ENCODE measurements at regions of chrX and their contacts with region 1.

Region 1: GRCh38 chrX:132615391-132616131 is 126.7 kb upstream of the MBNL3 start:
- DNase-seq: peak in 1 of 2 donors; percentile 69
- ATAC-seq: peak; percentile 58 to 72 (median 61)
- H3K4me3 ChIP-seq: no peak overlapping the region
- H3K4me3 Mint-ChIP-seq: no peak overlapping the region
- H3K27ac ChIP-seq: no peak overlapping the region
- H3K27ac Mint-ChIP-seq: no peak overlapping the region
- H3K4me1 ChIP-seq: no peaks in the 10 kb centered on the region
- H3K4me1 Mint-ChIP-seq: peaks cover 0 to 4% of the 10 kb centered on the region in 2 donors
- H3K27me3 ChIP-seq: no peaks in the 10 kb centered on the region
- H3K27me3 Mint-ChIP-seq: peaks cover 0 to 7% of the 10 kb centered on the region in 2 donors
- CTCF ChIP-seq: peak; percentile 23

Region 2: DNA sequence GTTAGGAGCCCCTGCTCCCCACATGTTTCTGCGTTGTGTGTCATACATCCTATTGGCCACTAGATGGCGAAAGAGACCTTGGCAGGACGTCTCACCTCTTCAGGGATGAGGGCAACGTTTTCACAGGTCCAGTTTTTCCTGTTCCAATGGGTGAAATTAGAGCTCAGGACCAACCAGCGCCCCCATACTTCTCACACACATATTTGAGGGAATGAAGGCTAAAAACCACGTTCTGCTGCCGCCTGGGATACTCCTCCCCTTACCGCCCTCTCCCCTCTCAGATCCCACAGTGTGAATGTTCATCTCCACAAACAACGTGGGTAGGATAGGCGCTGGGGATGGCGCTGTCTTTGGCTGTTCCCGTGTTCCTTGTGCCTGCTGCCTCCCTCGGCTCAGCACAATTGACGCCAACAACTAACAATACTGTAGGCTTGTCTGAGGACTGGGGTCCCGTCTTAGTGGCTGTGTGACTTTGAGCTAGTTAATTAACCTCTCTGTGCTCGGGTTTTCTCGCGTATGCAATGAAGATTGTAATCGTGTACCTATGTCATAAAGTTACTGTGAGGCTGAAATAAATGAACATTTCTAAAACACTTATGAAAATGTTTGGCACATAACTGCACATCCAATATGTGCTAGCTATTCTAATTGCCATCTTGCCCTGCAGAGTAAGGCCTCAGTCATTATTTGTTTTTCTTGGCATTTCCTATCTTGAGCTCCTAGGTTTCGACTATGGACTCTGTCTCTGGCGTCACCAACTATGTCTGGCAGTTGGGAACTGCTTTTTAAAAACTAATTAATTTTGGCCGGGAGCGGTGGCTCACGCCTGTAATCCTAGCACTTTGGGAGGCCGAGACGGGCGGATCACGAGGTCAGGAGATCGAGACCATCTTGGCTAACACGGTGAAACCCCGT is 773.8 kb before region 1 on chrX:
- intact Hi-C with region 1: loop called (anchors 2 kb)
- DNase-seq: peak in 1 of 2 donors; percentile 74
- ATAC-seq: peak in 2 of 3 donors; percentile 76 to 92
- H3K4me3 ChIP-seq: no peak overlapping the region
- H3K4me3 Mint-ChIP-seq: no peak overlapping the region
- H3K27ac ChIP-seq: no peak overlapping the region
- H3K27ac Mint-ChIP-seq: no peak overlapping the region
- H3K4me1 ChIP-seq: peaks cover 7% of the 10 kb centered on the region
- H3K4me1 Mint-ChIP-seq: peaks cover 0 to 7% of the 10 kb centered on the region in 2 donors
- H3K27me3 ChIP-seq: no peaks in the 10 kb centered on the region
- H3K27me3 Mint-ChIP-seq: peaks cover 0 to 33% of the 10 kb centered on the region in 2 donors
- CTCF ChIP-seq: peak; percentile 69

Region 3: DNA sequence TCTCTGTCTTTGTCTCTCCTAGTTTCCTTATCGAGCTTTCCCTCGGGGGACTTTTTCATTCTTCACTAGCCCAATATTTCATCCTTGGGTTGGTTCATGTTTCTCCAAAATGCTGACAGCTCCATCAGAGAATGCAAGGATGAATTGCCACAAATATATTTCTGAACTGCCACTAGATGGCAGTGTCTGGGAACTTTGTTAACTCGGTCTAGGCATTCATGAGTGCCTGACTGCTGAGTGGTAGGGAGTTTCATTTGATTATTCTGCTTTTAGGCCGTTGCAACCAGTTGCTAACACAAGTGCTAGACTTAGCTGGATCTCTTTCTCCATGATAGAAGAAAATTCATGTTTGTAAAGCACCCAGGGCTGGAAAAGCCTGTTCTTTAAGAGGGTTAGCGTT is 322.8 kb before region 1 on chrX:
- intact Hi-C with region 1: loop called (anchors 2 kb)
- DNase-seq: peak in 1 of 2 donors; percentile 70
- ATAC-seq: peak in 2 of 3 donors; percentile 38 to 81
- H3K4me3 ChIP-seq: no peak overlapping the region
- H3K4me3 Mint-ChIP-seq: no peak overlapping the region
- H3K27ac ChIP-seq: no peak overlapping the region
- H3K27ac Mint-ChIP-seq: no peak overlapping the region
- H3K4me1 ChIP-seq: no peaks in the 10 kb centered on the region
- H3K4me1 Mint-ChIP-seq: no peaks in the 10 kb centered on the region
- H3K27me3 ChIP-seq: no peaks in the 10 kb centered on the region
- H3K27me3 Mint-ChIP-seq: peaks cover 0 to 5% of the 10 kb centered on the region in 2 donors
- CTCF ChIP-seq: peak; percentile 55

Region 4: GRCh38 chrX:132488819-132489577 is 126.6 kb before region 1 on chrX and contains the start of gene MBNL3:
- intact Hi-C with region 1: loop called (anchors 2 kb)
- DNase-seq: peak; percentile 43 to 83
- ATAC-seq: peak; percentile 62 to 82 (median 68)
- H3K4me3 ChIP-seq: peak within 1 kb of the TSS; percentile 68
- H3K4me3 Mint-ChIP-seq: peak within 1 kb of the TSS; percentile 97
- H3K27ac ChIP-seq: peak within 1 kb of the TSS; percentile 90
- H3K27ac Mint-ChIP-seq: peak within 1 kb of the TSS; percentile 84 to 89
- H3K4me1 ChIP-seq: peaks cover 6% of the 10 kb centered on the region
- H3K4me1 Mint-ChIP-seq: peaks cover 19 to 44% of the 10 kb centered on the region in 2 donors
- H3K27me3 ChIP-seq: no peaks in the 10 kb centered on the region
- H3K27me3 Mint-ChIP-seq: peaks cover 0 to 22% of the 10 kb centered on the region in 2 donors
- CTCF ChIP-seq: no peak
- total RNA-seq, gene MBNL3: 55.3 to 64.3 (median 59.3) TPM

Region 5: GRCh38 chrX:132883358-132883915 is 267.9 kb after region 1 on chrX:
- intact Hi-C with region 1: no loop called
- DNase-seq: no peak
- ATAC-seq: no peak
- H3K4me3 ChIP-seq: no peak overlapping the region
- H3K4me3 Mint-ChIP-seq: no peak overlapping the region
- H3K27ac ChIP-seq: no peak overlapping the region
- H3K27ac Mint-ChIP-seq: no peak overlapping the region
- H3K4me1 ChIP-seq: no peaks in the 10 kb centered on the region
- H3K4me1 Mint-ChIP-seq: no peaks in the 10 kb centered on the region
- H3K27me3 ChIP-seq: no peaks in the 10 kb centered on the region
- H3K27me3 Mint-ChIP-seq: peaks cover 16 to 33% of the 10 kb centered on the region in 2 donors
- CTCF ChIP-seq: no peak

Region 6: GRCh38 chrX:133085785-133086184 is 470.2 kb after region 1 on chrX:
- intact Hi-C with region 1: no loop called
- DNase-seq: no peak
- ATAC-seq: no peak
- H3K4me3 ChIP-seq: no peak overlapping the region
- H3K4me3 Mint-ChIP-seq: no peak overlapping the region
- H3K27ac ChIP-seq: no peak overlapping the region
- H3K27ac Mint-ChIP-seq: no peak overlapping the region
- H3K4me1 ChIP-seq: no peaks in the 10 kb centered on the region
- H3K4me1 Mint-ChIP-seq: no peaks in the 10 kb centered on the region
- H3K27me3 ChIP-seq: no peaks in the 10 kb centered on the region
- H3K27me3 Mint-ChIP-seq: peaks cover 3 to 38% of the 10 kb centered on the region in 2 donors
- CTCF ChIP-seq: no peak